Heart right ventricle (tissue), 16 donors: ENCODE measurements at regions of chr22 and their contacts with region 1.

Region 1: GRCh38 chr22:36077271-36077670 is 48.6 kb upstream of the RBFOX2 start:
- DNase-seq: no peak
- ATAC-seq: peak in 6 of 8 donors; percentile 37 to 78 (median 60)
- H3K4me3 ChIP-seq: no peak overlapping the region
- H3K27ac ChIP-seq: peak overlapping the region in 5 of 10 donors; percentile 24 to 52 (median 43)
- H3K4me1 ChIP-seq: no peaks in the 10 kb centered on the region
- H3K27me3 ChIP-seq: no peaks in the 10 kb centered on the region
- CTCF ChIP-seq: no peak

Region 2: DNA sequence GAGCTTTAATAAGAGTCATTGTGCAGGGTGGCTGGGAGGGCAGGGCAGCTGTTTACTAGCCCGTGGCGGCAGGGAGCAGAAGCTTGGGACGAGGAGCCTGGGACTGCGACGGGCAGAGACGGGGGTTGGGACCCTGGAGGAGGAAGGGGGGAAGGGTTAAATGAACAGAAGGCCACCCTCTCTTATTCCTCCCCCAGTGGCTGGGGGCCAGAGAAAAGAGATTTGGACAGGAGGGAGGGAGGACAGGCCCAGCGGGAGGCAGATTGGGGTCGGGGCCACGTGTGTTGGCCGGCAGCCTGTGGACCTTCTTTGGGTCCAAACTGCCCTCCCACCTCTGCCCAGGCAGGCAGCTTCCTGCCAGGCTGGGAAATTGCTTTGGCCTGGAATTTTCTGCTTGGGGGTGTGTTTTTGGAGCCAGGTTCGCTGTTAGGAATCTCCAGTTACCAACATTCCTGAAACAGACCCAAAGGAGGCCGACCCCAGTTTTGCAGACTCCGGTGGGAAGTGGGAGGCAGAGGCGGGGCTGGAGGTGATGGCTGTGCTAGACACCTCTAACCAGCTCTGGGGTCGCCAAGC is 33.1 kb after region 1 on chr22:
- intact Hi-C with region 1: loop called in 2 of 10 experiments (anchors 5 kb)
- DNase-seq: no peak
- ATAC-seq: peak in 1 of 8 donors; percentile 27
- H3K4me3 ChIP-seq: no peak overlapping the region
- H3K27ac ChIP-seq: no peak overlapping the region
- H3K4me1 ChIP-seq: peaks cover 0 to 9% (median 0%) of the 10 kb centered on the region in 9 donors
- H3K27me3 ChIP-seq: peaks cover 0 to 3% (median 0%) of the 10 kb centered on the region in 7 donors
- CTCF ChIP-seq: no peak

Region 3: DNA sequence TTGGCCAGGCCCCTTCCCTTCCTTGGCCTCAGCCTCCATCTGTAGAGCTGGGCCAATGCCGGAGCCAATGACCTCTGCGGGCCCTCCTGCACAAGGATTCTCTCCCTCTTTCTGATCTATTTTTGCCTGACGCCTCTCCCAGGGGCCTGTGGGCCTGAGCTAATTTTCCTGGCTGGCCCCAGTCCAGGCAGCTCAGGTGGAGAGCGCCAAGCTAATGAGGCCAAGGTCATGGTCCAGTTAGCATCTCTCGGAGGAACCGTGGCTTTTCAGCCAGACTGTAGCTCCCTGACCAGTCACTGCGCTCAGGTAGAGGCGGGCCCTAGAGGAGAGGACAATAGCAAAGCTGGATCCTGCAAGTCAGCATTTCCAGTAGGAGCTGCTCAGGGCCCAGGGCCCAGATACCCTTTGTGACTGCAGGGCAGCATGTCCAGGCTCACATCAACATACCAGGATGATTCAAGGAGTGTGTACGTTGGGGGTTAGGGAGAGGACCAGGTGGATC is 39.8 kb after region 1 on chr22:
- intact Hi-C with region 1: loop called in 3 of 10 experiments (anchors 5 to 10 kb)
- DNase-seq: no peak
- ATAC-seq: peak in 3 of 8 donors; percentile 33 to 49 (median 45)
- H3K4me3 ChIP-seq: no peak overlapping the region
- H3K27ac ChIP-seq: no peak overlapping the region
- H3K4me1 ChIP-seq: peaks cover 0 to 4% (median 0%) of the 10 kb centered on the region in 9 donors
- H3K27me3 ChIP-seq: no peaks in the 10 kb centered on the region
- CTCF ChIP-seq: no peak

Region 4: DNA sequence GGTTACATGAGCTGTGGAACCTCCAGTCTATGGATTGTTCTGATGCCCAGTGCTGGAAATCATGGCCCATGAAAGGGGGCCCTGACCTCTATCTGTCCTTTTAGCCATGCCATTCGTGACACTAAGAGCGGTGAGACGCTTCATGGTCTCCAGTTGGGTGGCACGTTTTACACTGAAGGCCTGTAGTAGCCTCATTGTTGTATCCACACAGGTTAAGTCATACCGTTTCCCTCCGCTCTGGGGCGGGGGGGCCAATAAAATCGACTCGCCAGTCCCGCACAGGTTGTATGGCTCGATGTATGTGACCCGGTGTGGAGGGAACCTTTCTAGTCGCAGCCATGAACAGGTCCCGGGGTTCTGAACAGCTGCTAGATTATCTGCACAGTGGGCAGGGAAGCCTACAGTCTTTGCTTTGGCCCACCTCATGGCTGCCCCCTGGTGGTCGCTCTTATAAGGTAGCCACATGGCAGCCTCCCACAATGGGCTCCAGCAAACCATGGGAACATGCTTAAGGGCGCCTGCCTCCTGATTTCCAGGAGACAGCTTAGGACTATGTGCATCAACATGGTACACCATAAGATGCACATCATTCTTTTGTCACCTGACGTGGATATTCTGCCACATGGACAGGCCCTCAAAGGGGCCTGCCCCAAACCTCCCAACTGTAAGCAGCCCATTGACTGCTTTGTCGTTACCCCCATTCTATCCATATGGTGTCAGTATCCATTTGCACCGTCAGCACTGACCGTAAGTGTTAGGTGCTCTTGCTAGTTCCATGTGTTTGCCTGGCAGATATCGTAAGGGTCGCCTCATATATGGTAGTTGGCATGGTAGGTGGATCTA is 103.0 kb after region 1 on chr22:
- intact Hi-C with region 1: loop called in 1 of 10 experiments (anchors 5 kb)
- DNase-seq: peak; percentile 87 to 89
- ATAC-seq: peak; percentile 87 to 96 (median 94)
- H3K4me3 ChIP-seq: no peak overlapping the region
- H3K27ac ChIP-seq: no peak overlapping the region
- H3K4me1 ChIP-seq: peaks cover 0 to 22% (median 8%) of the 10 kb centered on the region in 9 donors
- H3K27me3 ChIP-seq: no peaks in the 10 kb centered on the region
- CTCF ChIP-seq: peak; percentile 80 to 96 (median 91)

Region 5: GRCh38 chr22:36365020-36365411 is 287.7 kb after region 1 on chr22:
- intact Hi-C with region 1: no loop called
- DNase-seq: peak in 1 of 2 donors; percentile 80
- ATAC-seq: peak in 7 of 8 donors; percentile 39 to 80 (median 57)
- H3K4me3 ChIP-seq: peak overlapping the region in 2 of 10 donors; percentile 2 to 6
- H3K27ac ChIP-seq: peak overlapping the region; percentile 48 to 93 (median 86)
- H3K4me1 ChIP-seq: peaks cover 84 to 100% (median 100%) of the 10 kb centered on the region in 9 donors
- H3K27me3 ChIP-seq: no peaks in the 10 kb centered on the region
- CTCF ChIP-seq: no peak